Adrenal gland (tissue), 19 donors: ENCODE measurements at regions of chr2 and their contacts with region 1.

Region 1: DNA sequence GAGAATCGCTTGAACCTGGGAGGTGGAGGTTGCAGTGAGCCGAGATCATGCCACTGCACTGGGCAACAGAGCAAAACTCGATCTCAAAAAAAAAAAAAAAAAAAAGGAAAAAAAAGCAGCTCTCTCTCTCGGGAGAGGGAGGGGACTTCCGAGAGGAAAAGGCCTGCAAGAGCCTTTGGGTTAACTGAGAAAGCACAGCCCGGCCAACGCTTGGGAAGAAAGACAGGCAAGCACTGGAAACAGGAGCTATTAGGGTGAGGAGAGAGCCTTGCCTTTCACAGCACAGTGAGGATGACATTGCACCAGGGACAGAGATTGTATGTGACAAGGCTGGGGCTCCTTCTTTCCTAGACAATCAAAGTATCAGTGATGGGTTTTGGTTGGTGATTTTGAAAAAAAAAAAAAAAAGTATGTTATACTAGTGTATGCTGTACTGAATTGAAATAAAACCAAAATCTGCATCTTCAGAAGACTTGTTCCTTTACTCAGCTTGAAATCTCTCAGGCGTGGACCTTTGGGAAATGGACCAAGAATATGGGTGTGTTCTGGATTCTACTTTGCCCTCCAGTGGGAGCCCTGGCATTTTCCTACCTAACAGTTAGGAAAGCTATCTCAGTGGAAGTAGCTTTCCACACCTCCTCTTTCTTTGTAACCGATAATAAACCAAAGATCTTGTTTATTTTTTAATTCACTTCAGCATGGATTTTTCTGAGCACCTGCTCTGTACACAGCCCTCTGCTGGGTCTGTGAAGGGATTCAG is 16.7 kb downstream of the SRSF7 start:
- DNase-seq: peak in 2 of 7 donors; percentile 31 to 49
- H3K4me3 ChIP-seq: no peak overlapping the region
- H3K27ac ChIP-seq: peak overlapping the region in 2 of 5 donors; percentile 24 to 40
- H3K4me1 ChIP-seq: peaks cover 14 to 19% of the 10 kb centered on the region in 2 donors
- H3K27me3 ChIP-seq: no peaks in the 10 kb centered on the region
- CTCF ChIP-seq: no peak
- POLR2A ChIP-seq: no peak

Region 2: GRCh38 chr2:38315707-38316333 is 418.7 kb before region 1 on chr2:
- intact Hi-C with region 1: loop called in 1 of 2 experiments (anchors 10 kb)
- DNase-seq: peak in 2 of 7 donors; percentile 21 to 31
- H3K4me3 ChIP-seq: no peak overlapping the region
- H3K27ac ChIP-seq: no peak overlapping the region
- H3K4me1 ChIP-seq: no peaks in the 10 kb centered on the region
- H3K27me3 ChIP-seq: no peaks in the 10 kb centered on the region
- CTCF ChIP-seq: peak; percentile 55 to 82 (median 75)
- POLR2A ChIP-seq: no peak

Region 3: DNA sequence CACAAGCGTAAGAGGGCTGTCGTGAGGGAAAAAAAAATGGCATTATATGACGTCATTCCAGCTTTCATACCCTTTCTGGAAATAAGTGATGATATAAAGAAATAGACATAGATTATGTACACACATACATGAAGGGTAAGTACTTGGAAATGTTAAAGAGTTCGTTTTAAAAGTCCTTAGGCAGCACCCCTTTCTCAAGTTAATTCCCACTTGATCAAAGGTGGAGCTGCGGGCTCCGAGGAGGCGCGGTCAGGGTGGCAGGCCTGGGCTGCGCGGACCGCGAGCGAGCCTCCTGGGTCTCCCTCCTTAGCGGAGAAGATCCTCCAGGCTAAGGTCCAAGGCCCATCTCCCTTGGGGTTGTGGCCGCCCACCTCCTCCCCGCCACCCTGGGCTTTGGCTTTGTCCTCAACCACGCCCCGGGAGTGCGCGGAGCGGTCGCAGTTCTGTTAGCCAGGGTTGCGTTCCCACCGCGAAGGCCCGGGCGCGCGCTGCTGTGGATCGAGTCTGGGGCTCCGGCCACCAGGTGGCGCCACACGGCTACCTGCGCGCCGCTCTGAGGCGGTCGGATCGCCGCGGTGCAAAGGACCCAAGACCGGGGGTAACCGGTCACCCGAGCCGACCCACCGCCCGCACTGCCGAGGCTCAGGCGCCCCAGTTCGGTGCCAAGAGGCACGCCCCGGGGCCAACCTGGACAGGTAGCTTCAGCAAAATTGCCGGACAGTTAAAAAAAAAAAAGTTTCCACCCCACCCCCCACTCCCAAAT is 198.6 kb before region 1 on chr2:
- intact Hi-C with region 1: loop called in 1 of 2 experiments (anchors 10 kb)
- DNase-seq: peak; percentile 72 to 91 (median 87)
- H3K4me3 ChIP-seq: peak overlapping the region in 2 of 4 donors; percentile 31 to 58
- H3K27ac ChIP-seq: peak overlapping the region in 2 of 5 donors; percentile 4 to 41
- H3K4me1 ChIP-seq: no peaks in the 10 kb centered on the region
- H3K27me3 ChIP-seq: no peaks in the 10 kb centered on the region
- CTCF ChIP-seq: peak; percentile 76 to 97 (median 91)
- POLR2A ChIP-seq: no peak

Region 4: DNA sequence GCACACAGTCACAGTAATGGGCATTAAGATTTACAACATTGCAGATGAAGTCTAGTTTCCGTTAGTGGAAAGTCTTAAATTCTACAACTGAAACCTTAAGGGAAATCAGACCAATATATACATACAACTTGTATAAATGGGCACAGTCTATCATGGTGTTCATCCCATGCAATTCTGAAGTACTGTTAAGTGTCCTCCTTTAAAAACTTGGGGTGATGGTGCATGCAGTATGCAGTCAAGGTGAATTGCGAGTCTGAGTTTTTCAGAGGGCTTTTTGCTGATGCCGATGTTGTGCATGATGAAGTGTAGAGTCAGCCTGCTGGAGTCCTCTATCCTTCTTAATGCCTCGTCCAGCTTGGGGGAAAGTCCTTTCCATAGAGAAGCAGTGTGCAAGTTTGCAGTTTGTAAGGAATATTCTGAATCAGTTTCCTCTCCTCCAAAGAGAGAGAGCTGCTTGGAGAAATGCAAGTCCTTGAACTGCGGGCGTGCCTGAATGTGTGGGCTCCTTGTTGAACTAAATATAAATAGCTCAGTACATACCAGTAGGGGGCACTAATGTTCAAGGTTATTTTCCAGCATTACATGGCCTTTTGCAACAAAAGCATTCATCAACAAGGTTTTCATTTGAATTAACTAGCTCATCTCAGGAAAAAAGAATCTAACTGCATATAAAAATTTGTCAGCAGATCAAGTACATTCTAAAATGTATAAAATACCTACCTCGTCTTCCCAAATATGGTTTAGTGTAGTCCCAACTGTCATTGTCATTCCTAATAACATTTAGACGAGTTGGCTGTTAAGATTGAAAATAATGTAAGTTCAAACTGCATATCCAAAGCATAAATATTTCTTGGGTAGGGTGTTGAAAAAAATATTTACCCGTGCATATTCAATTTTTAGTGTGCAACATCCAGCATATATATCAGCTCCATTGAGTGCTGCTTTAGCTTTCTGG is 153.0 kb before region 1 on chr2:
- intact Hi-C with region 1: loop called (anchors 5 kb)
- DNase-seq: peak in 6 of 7 donors; percentile 40 to 70 (median 56)
- H3K4me3 ChIP-seq: no peak overlapping the region
- H3K27ac ChIP-seq: no peak overlapping the region
- H3K4me1 ChIP-seq: peaks cover 6 to 18% of the 10 kb centered on the region in 2 donors
- H3K27me3 ChIP-seq: no peaks in the 10 kb centered on the region
- CTCF ChIP-seq: peak; percentile 53 to 83 (median 76)
- POLR2A ChIP-seq: no peak